Activated CD4-positive, alpha-beta T cell treated with anti-CD3 and anti-CD28 coated beads, Interleukin-2, amount 10 ng/mL, durations not matched to agents 7 days and 5 days (primary cell): ENCODE measurements at regions of chr10 and their contacts with region 1.

Region 1: DNA sequence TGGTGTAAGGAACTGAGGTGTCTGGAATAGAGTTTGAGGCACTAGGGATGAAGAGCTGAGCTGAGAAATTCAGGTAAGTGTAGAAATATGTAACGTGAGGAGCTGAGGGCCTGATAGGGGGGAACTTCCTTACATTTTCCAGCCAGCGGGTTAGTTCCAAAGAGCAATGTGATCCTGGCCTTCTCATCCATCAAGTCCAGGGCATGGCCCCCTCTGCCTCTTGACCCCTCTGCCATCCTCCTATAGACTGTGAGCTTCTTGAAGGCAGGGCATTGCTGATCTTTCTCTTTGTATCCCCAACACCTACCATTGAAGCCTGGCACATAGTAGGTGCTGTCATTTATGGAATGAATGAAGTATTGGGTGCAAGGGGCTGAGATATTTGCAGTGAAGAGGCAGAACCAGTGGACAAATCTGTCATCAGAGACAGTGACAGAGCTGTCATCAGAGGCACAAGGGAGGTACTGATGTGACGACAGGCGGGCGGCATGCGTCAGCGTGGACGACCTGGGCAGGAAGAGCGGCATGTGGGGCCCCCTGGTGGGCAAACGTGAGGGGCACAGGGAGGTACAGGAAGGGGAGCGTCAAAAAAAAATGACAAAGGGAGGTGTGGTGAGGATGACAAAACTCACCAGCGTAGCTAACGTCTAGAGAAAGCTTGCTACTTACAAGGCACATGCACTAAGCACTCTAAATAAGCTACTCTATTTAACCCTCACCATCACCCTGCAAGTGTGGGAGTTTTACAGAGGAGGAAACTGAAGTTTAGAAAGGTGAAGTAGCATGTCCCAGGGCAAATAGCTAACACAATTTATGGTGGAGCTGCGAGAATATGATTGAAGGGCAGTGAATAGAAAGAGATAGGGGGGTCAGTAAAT is 5.2 kb upstream of the CAMK2G start:
- DNase-seq: peak; percentile 95
- H3K4me3 Mint-ChIP-seq: no peak overlapping the region
- H3K27ac Mint-ChIP-seq: peak overlapping the region; percentile 76
- H3K4me1 Mint-ChIP-seq: peaks cover 42% of the 10 kb centered on the region
- H3K27me3 Mint-ChIP-seq: no peaks in the 10 kb centered on the region

Region 2: DNA sequence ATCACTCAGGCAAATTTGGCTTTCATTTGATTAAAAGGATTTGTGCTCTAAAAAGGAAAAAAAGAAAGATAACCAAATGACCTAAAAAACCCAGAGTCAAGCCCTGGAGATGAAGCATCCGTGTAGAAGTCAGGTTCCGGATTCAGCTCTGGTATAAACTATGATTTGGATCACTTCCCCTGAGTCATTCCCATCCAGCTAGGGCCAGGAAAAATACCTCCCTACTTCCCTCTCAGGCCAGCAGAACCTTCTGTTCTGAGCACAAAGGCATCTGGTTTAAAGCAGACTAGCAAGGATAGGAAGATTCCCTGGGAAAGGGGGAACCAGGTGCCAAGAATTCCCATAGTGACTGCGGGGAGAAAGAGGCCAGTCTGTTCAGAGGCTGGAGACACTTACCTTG is 42.5 kb before region 1 on chr10:
- CTCF ChIA-PET with region 1: interaction called, 15 read pairs
- POLR2A ChIA-PET with region 1: interaction called, 10 read pairs
- DNase-seq: no peak
- H3K4me3 Mint-ChIP-seq: no peak overlapping the region
- H3K27ac Mint-ChIP-seq: no peak overlapping the region
- H3K4me1 Mint-ChIP-seq: no peaks in the 10 kb centered on the region
- H3K27me3 Mint-ChIP-seq: no peaks in the 10 kb centered on the region

Region 3: DNA sequence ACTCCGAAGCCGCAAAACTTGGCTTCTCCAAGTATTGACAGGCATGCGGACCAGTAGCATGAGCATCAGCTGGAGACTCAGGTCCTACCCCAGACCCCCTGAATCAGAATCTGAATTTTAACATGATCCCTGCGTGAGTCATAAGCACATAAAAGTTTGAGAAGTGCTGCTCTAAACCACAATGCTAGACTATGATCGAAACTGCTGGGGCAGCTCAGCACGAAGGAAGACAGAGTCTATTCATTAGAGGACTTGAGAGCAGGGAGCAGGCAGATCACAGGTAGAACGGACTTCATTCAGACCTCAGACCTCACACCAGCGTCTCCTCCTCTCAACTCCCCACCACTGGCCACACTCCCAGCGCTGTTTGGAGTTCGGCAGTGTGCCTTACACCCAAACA is 22.1 kb before region 1 on chr10:
- CTCF ChIA-PET with region 1: interaction called, 212 read pairs
- POLR2A ChIA-PET with region 1: no interaction called
- DNase-seq: peak; percentile 51
- H3K4me3 Mint-ChIP-seq: peak overlapping the region; percentile 61
- H3K27ac Mint-ChIP-seq: peak overlapping the region; percentile 89
- H3K4me1 Mint-ChIP-seq: peaks cover 78% of the 10 kb centered on the region
- H3K27me3 Mint-ChIP-seq: no peaks in the 10 kb centered on the region

Region 4: DNA sequence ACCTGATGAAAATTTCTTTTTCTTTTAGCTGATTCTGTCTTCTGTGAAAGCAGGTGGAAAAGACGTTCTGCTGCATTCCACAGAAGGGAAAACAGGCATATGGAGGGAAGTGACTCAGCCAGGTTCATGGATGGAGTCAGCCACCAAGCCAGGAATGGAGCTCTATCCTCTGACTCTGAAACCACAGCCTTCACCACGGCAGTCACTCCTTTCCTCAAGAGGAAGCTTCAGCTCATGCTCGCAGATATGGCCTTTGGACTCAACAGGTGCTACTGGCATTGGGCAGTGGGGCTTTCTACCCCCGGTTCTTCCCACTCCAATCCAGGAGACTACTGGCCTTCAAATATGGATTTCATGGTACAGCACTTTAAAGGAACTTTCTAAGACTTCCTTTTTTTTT is 19.9 kb after region 1 on chr10:
- CTCF ChIA-PET with region 1: interaction called, 67 read pairs
- POLR2A ChIA-PET with region 1: interaction called, 4 read pairs
- DNase-seq: no peak
- H3K4me3 Mint-ChIP-seq: no peak overlapping the region
- H3K27ac Mint-ChIP-seq: no peak overlapping the region
- H3K4me1 Mint-ChIP-seq: peaks cover 3% of the 10 kb centered on the region
- H3K27me3 Mint-ChIP-seq: peaks cover 19% of the 10 kb centered on the region

Region 5: GRCh38 chr10:73931767-73932619 is 52.5 kb after region 1 on chr10:
- CTCF ChIA-PET with region 1: interaction called, 25 read pairs
- POLR2A ChIA-PET with region 1: no interaction called
- DNase-seq: peak; percentile 64
- H3K4me3 Mint-ChIP-seq: peak overlapping the region; percentile 7
- H3K27ac Mint-ChIP-seq: peak overlapping the region; percentile 80
- H3K4me1 Mint-ChIP-seq: peaks cover 16% of the 10 kb centered on the region
- H3K27me3 Mint-ChIP-seq: peaks cover 18% of the 10 kb centered on the region

Region 6: DNA sequence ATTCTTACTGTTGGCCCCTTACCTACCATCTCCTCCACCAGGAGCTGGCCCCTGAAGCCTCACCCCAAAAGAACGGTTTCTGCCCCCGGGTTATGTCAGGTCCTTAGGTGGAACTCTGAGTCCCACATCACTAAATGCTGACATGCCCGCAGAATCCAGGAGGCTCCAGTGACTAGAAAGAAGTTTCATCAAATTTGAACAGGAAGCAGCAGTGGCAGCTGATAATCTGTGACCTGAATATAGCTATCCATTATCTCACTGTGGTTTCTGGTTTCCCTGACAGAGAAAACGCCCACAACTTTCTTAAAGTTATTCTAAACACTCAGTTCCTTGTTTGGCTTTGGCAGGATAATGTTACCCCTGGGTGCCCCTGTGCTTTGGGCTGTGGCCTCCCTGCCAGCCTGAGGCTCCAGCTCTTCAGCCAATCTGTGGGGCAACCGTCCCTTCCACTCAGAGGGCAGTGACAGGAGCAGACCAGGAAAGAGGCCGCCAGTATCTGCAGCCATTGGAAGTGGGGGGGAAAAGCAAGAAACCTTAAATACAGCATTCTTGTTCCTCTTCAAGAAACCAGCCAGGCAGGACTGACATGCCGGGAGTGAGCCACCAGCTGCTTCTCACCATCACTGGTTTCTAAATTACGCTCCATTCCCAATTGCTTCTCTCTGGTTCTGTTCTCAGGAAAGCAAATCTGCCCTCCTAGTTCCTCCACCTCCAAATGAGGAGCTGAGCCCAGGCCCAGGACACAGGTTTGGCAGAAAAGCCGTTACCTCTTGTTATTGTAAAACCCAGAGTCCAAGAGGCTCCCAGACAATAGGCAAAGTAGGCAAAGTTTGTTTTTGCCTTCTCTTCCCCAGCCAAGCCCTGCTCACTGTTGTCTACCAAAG is 77.2 kb after region 1 on chr10:
- CTCF ChIA-PET with region 1: interaction called, 11 read pairs
- POLR2A ChIA-PET with region 1: interaction called, 3 read pairs
- DNase-seq: peak; percentile 59
- H3K4me3 Mint-ChIP-seq: peak overlapping the region; percentile 65
- H3K27ac Mint-ChIP-seq: peak overlapping the region; percentile 95
- H3K4me1 Mint-ChIP-seq: peaks cover 59% of the 10 kb centered on the region
- H3K27me3 Mint-ChIP-seq: no peaks in the 10 kb centered on the region